Activated CD4-positive, alpha-beta memory T cell treated with anti-CD3 and anti-CD28 coated beads for 36 hours (primary cell): ENCODE measurements at regions of chr15 and their contacts with region 1.

Region 1: GRCh38 chr15:64153480-64154367 is 2.2 kb downstream of the SNX22 start:
- DNase-seq: peak; percentile 94
- H3K4me3 Mint-ChIP-seq: peak overlapping the region; percentile 43
- H3K27ac Mint-ChIP-seq: peak overlapping the region; percentile 10
- H3K4me1 Mint-ChIP-seq: peaks cover 26% of the 10 kb centered on the region
- H3K27me3 Mint-ChIP-seq: peaks cover 14% of the 10 kb centered on the region

Region 2: DNA sequence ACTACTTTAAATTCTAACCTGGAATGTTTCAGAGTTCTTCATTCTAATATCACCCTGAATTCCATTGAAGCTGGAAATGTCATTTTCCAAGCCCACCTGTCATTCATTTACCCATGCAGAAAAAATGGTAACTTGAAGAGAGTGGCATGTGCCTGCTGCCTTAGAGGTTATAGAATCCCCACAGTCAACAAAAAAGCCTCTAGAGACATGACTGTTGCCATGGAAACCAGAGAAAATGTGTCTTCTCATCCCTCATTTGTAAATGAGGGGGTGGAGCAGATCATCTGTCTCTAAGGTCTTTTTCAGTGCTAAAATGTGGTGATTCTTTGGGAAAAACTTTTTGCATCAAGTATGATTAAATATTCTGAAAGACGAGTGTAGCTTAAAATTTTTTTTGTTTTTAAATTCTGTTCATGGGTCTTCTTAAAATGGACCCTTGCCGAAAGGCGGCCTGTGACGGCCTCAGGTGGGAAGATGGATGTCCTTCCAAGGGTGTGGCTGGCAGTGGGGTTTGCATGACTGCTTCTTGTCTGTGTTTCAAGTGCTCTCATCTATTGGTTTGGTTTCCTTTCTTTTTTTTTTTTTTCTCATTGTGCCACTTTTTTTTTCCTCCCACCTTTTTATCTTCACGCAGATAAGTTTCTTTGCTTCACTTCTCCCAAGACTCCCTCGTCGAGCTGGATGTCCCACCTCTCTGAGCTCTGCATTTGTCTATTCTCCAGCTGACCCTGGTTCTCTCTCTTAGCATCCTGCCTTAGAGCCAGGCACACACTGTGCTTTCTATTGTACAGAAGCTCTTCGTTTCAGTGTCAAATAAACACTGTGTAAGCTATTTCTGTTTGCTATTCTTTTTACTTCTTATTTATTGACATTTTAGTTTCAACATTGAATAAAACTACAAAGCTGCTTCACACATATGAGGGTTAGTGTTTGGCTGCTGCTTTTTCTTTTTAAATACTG is 1088.2 kb before region 1 on chr15:
- CTCF ChIA-PET with region 1: no interaction called
- POLR2A ChIA-PET with region 1: no interaction called
- intact Hi-C with region 1: no loop called
- DNase-seq: no peak
- H3K4me3 Mint-ChIP-seq: no peak overlapping the region
- H3K27ac Mint-ChIP-seq: no peak overlapping the region
- H3K4me1 Mint-ChIP-seq: no peaks in the 10 kb centered on the region
- H3K27me3 Mint-ChIP-seq: no peaks in the 10 kb centered on the region

Region 3: DNA sequence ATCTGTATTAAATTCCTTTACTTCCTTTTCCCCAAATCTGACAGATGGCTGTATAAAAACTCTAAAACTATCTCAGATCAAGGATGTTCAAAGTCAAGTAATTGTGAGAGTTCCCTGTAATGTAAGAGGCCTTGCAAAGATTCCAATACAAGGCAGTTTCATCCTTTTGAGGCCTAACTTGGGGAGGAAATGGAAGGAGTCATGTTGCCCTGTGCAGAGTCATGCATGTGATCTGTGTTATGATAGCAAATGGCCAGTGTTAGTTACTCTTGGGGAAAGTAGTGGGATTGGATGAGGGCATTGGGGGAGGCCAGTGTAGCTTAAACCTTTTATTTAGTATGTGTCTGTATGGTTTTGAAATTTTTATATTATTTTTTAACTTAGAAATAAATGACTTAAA is 580.2 kb before region 1 on chr15:
- CTCF ChIA-PET with region 1: no interaction called
- POLR2A ChIA-PET with region 1: no interaction called
- intact Hi-C with region 1: no loop called
- DNase-seq: no peak
- H3K4me3 Mint-ChIP-seq: no peak overlapping the region
- H3K27ac Mint-ChIP-seq: peak overlapping the region; percentile 68
- H3K4me1 Mint-ChIP-seq: peaks cover 19% of the 10 kb centered on the region
- H3K27me3 Mint-ChIP-seq: no peaks in the 10 kb centered on the region

Region 4: GRCh38 chr15:63896336-63897115 is 257.2 kb before region 1 on chr15:
- CTCF ChIA-PET with region 1: no interaction called
- POLR2A ChIA-PET with region 1: no interaction called
- intact Hi-C with region 1: no loop called
- DNase-seq: peak; percentile 63
- H3K4me3 Mint-ChIP-seq: no peak overlapping the region
- H3K27ac Mint-ChIP-seq: peak overlapping the region; percentile 7
- H3K4me1 Mint-ChIP-seq: peaks cover 42% of the 10 kb centered on the region
- H3K27me3 Mint-ChIP-seq: no peaks in the 10 kb centered on the region

Region 5: DNA sequence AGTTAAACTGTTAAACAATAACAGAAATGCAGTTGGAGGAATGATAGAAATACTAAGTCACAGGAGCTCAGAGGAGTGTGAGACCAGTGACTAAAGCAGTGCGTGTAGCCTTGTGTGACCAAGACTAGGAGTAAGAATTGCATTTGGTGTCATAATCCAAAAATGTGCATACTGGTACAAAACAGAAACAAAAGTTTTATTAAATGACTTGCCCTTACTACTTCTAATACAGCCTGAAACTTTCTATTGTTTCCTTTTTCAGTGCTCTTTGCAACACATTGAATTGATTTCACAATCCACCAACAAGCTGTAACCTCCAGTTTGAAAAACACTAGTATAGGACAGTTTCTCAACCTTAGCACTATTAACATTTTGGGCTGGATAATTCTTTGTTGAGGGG is 40.8 kb before region 1 on chr15:
- CTCF ChIA-PET with region 1: interaction called, 4 read pairs
- POLR2A ChIA-PET with region 1: no interaction called
- intact Hi-C with region 1: loop called (anchors 5 kb)
- DNase-seq: peak; percentile 28
- H3K4me3 Mint-ChIP-seq: no peak overlapping the region
- H3K27ac Mint-ChIP-seq: peak overlapping the region; percentile 76
- H3K4me1 Mint-ChIP-seq: peaks cover 38% of the 10 kb centered on the region
- H3K27me3 Mint-ChIP-seq: no peaks in the 10 kb centered on the region

Region 6: GRCh38 chr15:64117759-64118487 is 35.8 kb before region 1 on chr15:
- CTCF ChIA-PET with region 1: interaction called, 12 read pairs
- POLR2A ChIA-PET with region 1: no interaction called
- intact Hi-C with region 1: loop called (anchors 5 kb)
- DNase-seq: no peak
- H3K4me3 Mint-ChIP-seq: no peak overlapping the region
- H3K27ac Mint-ChIP-seq: no peak overlapping the region
- H3K4me1 Mint-ChIP-seq: peaks cover 3% of the 10 kb centered on the region
- H3K27me3 Mint-ChIP-seq: no peaks in the 10 kb centered on the region

Region 7: DNA sequence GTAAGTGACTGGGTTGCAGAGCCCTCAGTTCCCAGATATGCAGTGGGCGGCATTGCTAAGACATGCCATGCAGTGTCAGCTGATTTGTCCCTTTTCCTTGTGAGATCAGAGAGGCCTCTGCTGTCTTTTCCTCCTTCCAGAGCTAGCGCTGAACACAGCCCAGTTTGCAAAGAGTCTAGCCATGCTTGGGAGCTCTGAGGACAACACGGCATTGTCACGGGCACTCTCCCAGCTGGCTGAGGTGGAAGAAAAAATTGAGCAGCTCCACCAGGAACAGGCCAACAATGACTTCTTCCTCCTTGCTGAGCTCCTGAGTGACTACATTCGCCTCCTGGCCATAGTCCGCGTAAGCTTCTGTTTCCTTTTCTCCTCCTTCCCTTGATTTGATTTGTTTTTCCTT is 22.2 kb before region 1 on chr15:
- CTCF ChIA-PET with region 1: interaction called, 16 read pairs
- POLR2A ChIA-PET with region 1: interaction called, 3 read pairs
- intact Hi-C with region 1: no loop called
- DNase-seq: no peak
- H3K4me3 Mint-ChIP-seq: no peak overlapping the region
- H3K27ac Mint-ChIP-seq: no peak overlapping the region
- H3K4me1 Mint-ChIP-seq: no peaks in the 10 kb centered on the region
- H3K27me3 Mint-ChIP-seq: no peaks in the 10 kb centered on the region